Left cardiac atrium (tissue), 4 donors: ENCODE measurements at regions of chr18 and their contacts with region 1.

Region 1: DNA sequence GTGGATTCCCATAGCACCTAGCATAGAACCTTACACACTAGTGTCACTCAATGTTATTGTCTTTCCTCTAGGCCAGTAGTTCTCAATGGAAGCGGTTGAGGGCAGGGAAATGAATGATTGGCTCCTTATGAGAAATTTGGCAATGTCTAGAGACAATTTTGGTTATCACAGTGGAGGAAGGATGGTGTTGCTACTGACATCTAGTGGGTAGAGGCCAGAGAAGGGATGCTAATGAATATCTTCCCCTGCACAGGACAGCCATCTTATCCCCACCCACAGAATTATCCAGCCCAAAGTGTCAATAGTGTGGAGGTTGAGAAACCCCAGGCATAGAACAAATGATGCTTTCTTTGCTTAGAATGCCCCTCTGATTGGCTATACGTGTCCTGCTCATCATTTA is 15.8 kb downstream of the C18orf63 start:
- DNase-seq: no peak
- ATAC-seq: peak; percentile 72 to 77

Region 2: GRCh38 chr18:74204526-74205152 is 126.8 kb before region 1 on chr18:
- intact Hi-C with region 1: loop called (anchors 5 kb)
- DNase-seq: no peak
- ATAC-seq: no peak

Region 3: GRCh38 chr18:74242438-74243096 is 88.8 kb before region 1 on chr18:
- intact Hi-C with region 1: loop called in 1 of 2 experiments (anchors 5 kb)
- DNase-seq: no peak
- ATAC-seq: peak; percentile 73 to 86